ENCODE measurements at regions of chr2 and their contacts with region 1.

Region 1: DNA sequence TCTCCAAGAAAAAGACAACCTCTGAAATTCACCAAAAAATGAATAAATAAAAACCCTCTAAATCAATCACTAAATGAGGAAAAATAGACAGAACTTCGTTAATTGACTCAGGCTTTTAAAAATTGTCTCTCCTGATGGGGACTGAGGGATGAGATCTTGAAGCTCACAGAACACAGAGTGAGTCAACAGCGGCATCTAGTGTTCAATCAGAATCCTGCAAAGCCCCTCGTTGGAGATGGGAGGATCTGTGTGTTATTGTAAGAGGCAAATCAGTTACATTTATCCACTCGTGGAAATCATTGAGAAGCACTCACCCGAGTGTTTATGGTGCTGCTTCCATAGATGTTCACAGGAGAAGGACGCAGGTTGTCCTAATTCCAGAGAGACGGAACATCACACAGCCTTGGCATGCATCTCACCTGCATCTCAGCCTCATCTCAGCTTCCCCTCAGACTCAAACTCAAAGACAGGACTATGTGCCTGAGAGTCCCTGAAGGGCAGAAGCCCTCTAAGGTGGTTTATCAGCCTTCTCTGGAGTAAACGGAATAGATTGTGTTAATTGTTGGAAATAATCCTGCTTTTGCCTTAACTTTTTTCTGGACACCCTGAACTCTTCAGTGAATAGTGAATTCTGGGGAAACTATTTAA is 82.0 kb downstream of the MREG start:
- DNase-seq: peak; percentile 82
- H3K4me3 ChIP-seq: no peak overlapping the region
- H3K27ac ChIP-seq: no peak overlapping the region
- H3K4me1 ChIP-seq: no peaks in the 10 kb centered on the region
- H3K27me3 ChIP-seq: peaks cover 0 to 2% of the 10 kb centered on the region in 2 experiments
- CTCF ChIP-seq: peak; percentile 84 to 88
- POLR2A ChIP-seq: no peak

Region 2: GRCh38 chr2:213934560-213934959 is 1996.8 kb before region 1 on chr2:
- CTCF ChIA-PET with region 1: interaction called, 4 read pairs
- POLR2A ChIA-PET with region 1: no interaction called
- dilution Hi-C with region 1: no loop called
- intact Hi-C with region 1: loop called (anchors 5 kb)
- DNase-seq: peak; percentile 42
- H3K4me3 ChIP-seq: no peak overlapping the region
- H3K27ac ChIP-seq: no peak overlapping the region
- H3K4me1 ChIP-seq: no peaks in the 10 kb centered on the region
- H3K27me3 ChIP-seq: no peaks in the 10 kb centered on the region
- CTCF ChIP-seq: peak; percentile 30 to 33
- POLR2A ChIP-seq: no peak

Region 3: DNA sequence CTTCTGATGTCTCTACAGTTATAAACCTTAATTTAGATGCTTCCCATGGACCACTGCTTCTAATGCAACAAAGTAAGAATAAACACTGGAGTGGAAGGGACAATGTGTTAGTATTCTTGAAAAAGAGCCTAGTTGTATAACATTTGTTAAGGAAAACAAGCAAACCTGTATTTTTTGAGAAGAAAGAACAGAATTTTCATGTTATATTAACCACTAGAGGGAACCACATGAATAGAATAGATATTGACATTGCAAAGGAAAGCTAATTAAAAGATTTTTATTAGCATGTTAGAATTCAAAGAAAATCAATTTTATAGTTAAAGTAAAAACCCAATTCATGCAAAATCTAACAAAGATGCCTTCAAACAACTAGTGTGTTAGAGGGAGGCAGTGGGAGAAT is 970.7 kb before region 1 on chr2:
- CTCF ChIA-PET with region 1: interaction called, 54 read pairs
- POLR2A ChIA-PET with region 1: no interaction called
- dilution Hi-C with region 1: no loop called
- intact Hi-C with region 1: loop called (anchors 2 kb)
- DNase-seq: no peak
- H3K4me3 ChIP-seq: no peak overlapping the region
- H3K27ac ChIP-seq: no peak overlapping the region
- H3K4me1 ChIP-seq: no peaks in the 10 kb centered on the region
- H3K27me3 ChIP-seq: no peaks in the 10 kb centered on the region
- CTCF ChIP-seq: no peak
- POLR2A ChIP-seq: no peak

Region 4: DNA sequence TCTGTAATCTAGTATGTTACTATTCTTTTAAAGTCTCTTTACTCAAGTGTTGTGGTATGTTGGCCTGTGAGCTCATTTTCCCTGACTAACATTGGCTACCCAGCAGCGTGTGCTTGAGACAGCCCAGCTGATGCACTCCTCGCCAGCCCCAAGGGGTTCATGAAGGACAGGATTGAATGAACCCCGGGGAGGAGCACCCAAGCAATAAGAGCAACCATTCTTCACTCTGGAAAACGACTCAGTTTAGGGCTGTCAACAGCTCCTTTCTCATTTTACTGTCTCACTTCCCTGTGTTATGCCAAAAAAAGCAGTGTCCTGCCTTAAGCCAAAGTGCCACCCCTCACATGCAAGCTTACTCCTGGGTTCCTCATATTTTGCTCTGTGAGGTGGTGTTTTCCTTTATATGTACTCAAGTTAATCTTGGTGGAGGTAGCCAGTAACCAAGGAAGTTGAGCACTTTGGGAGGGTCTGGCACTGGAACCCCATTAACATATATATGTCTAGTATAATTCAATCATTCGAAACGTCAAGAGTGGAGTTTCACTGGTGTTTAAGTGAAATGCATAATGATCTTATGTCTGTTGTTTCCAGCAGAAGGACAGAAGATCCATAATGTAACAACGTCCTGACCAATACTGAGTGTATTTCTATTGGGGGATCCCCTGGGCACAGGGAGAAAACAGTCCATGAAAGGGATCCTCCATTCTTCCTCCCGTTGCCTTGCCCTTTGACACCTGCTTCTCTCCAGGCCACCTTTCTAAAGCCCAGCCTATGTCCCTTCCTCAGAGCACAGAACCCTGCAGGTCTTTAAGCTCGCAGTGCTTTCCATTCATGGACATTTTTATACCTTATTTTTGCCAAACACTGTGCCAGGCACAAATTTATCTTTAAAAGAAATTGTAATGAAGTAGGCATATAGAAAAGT is 576.3 kb before region 1 on chr2:
- CTCF ChIA-PET with region 1: interaction called, 14 read pairs
- POLR2A ChIA-PET with region 1: no interaction called
- dilution Hi-C with region 1: no loop called
- intact Hi-C with region 1: no loop called
- DNase-seq: no peak
- H3K4me3 ChIP-seq: no peak overlapping the region
- H3K27ac ChIP-seq: no peak overlapping the region
- H3K4me1 ChIP-seq: no peaks in the 10 kb centered on the region
- H3K27me3 ChIP-seq: no peaks in the 10 kb centered on the region
- CTCF ChIP-seq: no peak
- POLR2A ChIP-seq: no peak

Region 5: DNA sequence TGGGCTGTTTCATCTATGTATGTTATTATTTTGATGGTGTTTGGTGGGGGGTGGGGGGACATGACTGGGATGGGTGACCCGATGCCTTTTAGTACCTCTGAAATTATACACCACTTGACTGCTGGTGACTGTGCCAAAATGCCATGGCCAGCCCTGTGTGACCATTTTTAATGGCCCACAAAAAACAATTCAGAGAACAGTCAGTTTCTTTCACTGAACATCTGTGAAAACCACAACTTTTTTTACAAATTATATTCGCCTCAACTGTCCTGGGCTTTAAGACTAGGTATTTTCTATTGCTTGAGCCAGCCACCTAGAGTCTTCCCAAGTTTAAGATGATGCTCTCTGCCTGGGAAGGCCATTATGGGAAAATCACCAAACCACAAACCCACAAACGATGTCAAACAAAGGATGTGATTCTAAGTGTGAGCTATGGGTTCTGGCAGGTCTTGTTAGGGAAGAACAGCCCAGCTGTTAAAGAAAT is 529.4 kb before region 1 on chr2:
- CTCF ChIA-PET with region 1: interaction called, 33 read pairs
- POLR2A ChIA-PET with region 1: no interaction called
- dilution Hi-C with region 1: no loop called
- intact Hi-C with region 1: no loop called
- DNase-seq: no peak
- H3K4me3 ChIP-seq: no peak overlapping the region
- H3K27ac ChIP-seq: peak overlapping the region; percentile 15
- H3K4me1 ChIP-seq: peaks cover 22% of the 10 kb centered on the region
- H3K27me3 ChIP-seq: no peaks in the 10 kb centered on the region
- CTCF ChIP-seq: no peak
- POLR2A ChIP-seq: no peak

Region 6: GRCh38 chr2:215425021-215425782 is 506.2 kb before region 1 on chr2:
- CTCF ChIA-PET with region 1: interaction called, 16 read pairs
- POLR2A ChIA-PET with region 1: no interaction called
- dilution Hi-C with region 1: no loop called
- intact Hi-C with region 1: no loop called
- DNase-seq: no peak
- H3K4me3 ChIP-seq: no peak overlapping the region
- H3K27ac ChIP-seq: no peak overlapping the region
- H3K4me1 ChIP-seq: peaks cover 60% of the 10 kb centered on the region
- H3K27me3 ChIP-seq: no peaks in the 10 kb centered on the region
- CTCF ChIP-seq: no peak
- POLR2A ChIP-seq: peak; percentile 58

Region 7: DNA sequence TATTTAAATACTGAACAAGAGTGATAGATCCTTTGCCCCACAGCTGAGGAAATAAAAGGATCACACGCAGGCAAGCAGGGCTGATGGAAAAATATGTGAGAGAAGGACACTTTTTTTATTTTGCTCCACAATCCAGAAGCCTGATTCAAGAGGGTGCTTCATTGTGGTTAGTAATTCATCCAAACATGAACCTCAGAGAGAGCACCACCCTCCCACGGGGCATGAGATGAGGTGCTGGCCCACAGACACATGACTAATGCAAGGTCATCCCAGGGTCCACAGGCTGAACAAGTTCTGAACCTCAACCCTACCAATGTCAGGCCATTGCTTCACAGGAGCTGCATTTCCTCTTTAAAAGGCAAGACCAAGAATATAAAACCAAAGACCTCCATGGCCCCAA is 157.7 kb before region 1 on chr2:
- CTCF ChIA-PET with region 1: no interaction called
- POLR2A ChIA-PET with region 1: no interaction called
- dilution Hi-C with region 1: no loop called
- intact Hi-C with region 1: no loop called
- DNase-seq: no peak
- H3K4me3 ChIP-seq: no peak overlapping the region
- H3K27ac ChIP-seq: no peak overlapping the region
- H3K4me1 ChIP-seq: peaks cover 32% of the 10 kb centered on the region
- H3K27me3 ChIP-seq: no peaks in the 10 kb centered on the region
- CTCF ChIP-seq: no peak
- POLR2A ChIP-seq: no peak

Region 8: DNA sequence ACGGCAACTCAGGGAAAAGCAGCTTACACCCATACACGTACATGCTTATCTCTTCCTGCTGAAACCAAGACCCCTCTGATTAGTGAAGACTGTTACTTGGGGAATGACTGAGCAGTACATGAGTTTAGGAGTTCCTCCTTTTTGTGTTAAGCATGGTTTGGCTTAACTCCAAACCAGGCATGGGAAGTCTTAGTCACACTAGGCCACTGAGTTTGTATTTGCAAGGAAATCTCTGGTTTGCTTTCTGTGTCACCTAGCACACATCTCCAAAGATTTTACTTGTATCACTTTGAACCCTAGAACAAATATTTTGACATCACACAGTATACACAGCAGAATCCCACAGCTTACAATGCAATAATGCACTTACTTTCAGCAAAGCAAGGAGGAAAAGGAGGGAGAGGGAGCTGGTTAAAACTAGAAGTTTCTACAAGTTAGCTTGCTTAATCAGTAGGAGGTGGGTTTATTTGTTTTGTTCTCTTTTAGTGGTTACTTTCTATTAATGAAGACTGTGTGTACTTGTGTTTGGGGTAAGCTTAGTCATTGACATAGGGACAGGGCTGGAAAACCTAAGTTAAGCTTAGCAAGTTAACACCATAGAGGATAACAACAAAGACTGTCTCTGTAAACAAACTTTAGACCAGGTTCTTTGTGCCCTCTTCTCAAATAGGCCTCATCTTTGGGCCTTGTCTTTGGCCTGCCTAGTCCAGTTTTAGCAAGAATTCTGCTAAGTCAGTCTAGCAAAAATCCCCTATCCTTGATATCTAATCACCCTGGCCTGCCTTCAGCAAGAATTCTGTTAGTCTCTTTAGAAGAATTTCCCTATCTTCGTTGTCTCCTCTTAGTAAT is 137.4 kb before region 1 on chr2:
- CTCF ChIA-PET with region 1: interaction called, 12 read pairs
- POLR2A ChIA-PET with region 1: no interaction called
- dilution Hi-C with region 1: no loop called
- intact Hi-C with region 1: no loop called
- DNase-seq: peak; percentile 97
- H3K4me3 ChIP-seq: no peak overlapping the region
- H3K27ac ChIP-seq: peak overlapping the region; percentile 82
- H3K4me1 ChIP-seq: peaks cover 44% of the 10 kb centered on the region
- H3K27me3 ChIP-seq: no peaks in the 10 kb centered on the region
- CTCF ChIP-seq: no peak
- POLR2A ChIP-seq: no peak

Measured in endothelial cell of umbilical vein (primary cell).